ENCODE measurements at regions of chr1 and their contacts with region 1.

Region 1: GRCh38 chr1:8560611-8561544 is 243.0 kb downstream of the SLC45A1 start:
- DNase-seq: no peak
- H3K4me3 ChIP-seq: no peak overlapping the region
- H3K27ac ChIP-seq: no peak overlapping the region
- H3K4me1 ChIP-seq: peaks cover 0 to 28% (median 19%) of the 10 kb centered on the region in 4 donors
- H3K27me3 ChIP-seq: no peaks in the 10 kb centered on the region
- CTCF ChIP-seq: peak; percentile 88 to 92 (median 88)
- EP300 ChIP-seq: no peak
- POLR2A ChIP-seq: no peak

Region 2: GRCh38 chr1:8439015-8439702 is 121.7 kb before region 1 on chr1:
- intact Hi-C with region 1: no loop called
- DNase-seq: peak; percentile 92
- H3K4me3 ChIP-seq: no peak overlapping the region
- H3K27ac ChIP-seq: peak overlapping the region; percentile 60 to 80 (median 70)
- H3K4me1 ChIP-seq: peaks cover 0 to 57% (median 46%) of the 10 kb centered on the region in 4 donors
- H3K27me3 ChIP-seq: no peaks in the 10 kb centered on the region
- CTCF ChIP-seq: no peak
- EP300 ChIP-seq: no peak
- POLR2A ChIP-seq: no peak

Region 3: DNA sequence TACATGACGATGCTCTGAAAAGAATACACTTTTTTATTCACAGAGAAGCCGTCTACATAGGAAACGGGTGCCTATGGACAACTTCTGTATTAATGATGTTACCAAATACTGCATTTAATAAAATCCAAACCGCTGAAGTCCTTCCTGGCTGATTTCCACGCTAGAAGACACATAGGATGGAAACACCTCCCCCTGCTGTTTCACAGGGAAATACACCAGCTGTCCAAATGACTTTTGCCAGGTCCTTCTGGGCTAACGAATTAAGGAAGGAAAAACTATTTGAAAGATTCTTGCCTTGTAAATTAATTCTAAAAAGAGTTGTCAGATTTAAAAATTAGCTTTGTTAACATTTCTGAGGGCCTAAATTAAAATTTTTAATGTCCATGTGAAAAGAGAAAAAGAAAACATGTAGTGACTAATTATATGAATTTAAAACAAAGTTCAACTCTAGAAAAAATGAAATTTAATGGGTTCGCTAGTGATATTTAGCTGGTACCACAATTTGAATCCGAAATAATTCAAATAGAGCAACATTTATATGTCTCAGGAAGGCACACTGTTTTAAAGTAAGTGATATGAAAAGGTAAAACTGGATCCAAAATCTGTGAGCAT is 110.5 kb after region 1 on chr1:
- intact Hi-C with region 1: loop called (anchors 1 kb)
- DNase-seq: peak; percentile 81
- H3K4me3 ChIP-seq: no peak overlapping the region
- H3K27ac ChIP-seq: peak overlapping the region in 2 of 4 donors; percentile 46 to 51
- H3K4me1 ChIP-seq: peaks cover 0 to 65% (median 51%) of the 10 kb centered on the region in 4 donors
- H3K27me3 ChIP-seq: no peaks in the 10 kb centered on the region
- CTCF ChIP-seq: peak; percentile 44 to 87 (median 76)
- EP300 ChIP-seq: no peak
- POLR2A ChIP-seq: no peak

Region 4: GRCh38 chr1:8848663-8849386 is 287.9 kb after region 1 on chr1:
- intact Hi-C with region 1: loop called (anchors 2 kb)
- DNase-seq: peak; percentile 97
- H3K4me3 ChIP-seq: no peak overlapping the region
- H3K27ac ChIP-seq: peak overlapping the region; percentile 54 to 75 (median 71)
- H3K4me1 ChIP-seq: peaks cover 0 to 21% (median 6%) of the 10 kb centered on the region in 4 donors
- H3K27me3 ChIP-seq: no peaks in the 10 kb centered on the region
- CTCF ChIP-seq: peak; percentile 57 to 92 (median 88)
- EP300 ChIP-seq: peak in 2 of 4 donors; percentile 14 to 51
- POLR2A ChIP-seq: no peak

Region 5: GRCh38 chr1:8903908-8904650 is 343.2 kb after region 1 on chr1:
- intact Hi-C with region 1: no loop called
- DNase-seq: peak; percentile 74
- H3K4me3 ChIP-seq: no peak overlapping the region
- H3K27ac ChIP-seq: peak overlapping the region in 3 of 4 donors; percentile 35 to 60 (median 55)
- H3K4me1 ChIP-seq: peaks cover 0 to 14% (median 13%) of the 10 kb centered on the region in 4 donors
- H3K27me3 ChIP-seq: no peaks in the 10 kb centered on the region
- CTCF ChIP-seq: no peak
- EP300 ChIP-seq: no peak
- POLR2A ChIP-seq: no peak